ENCODE measurements at regions of chr13 and their contacts with region 1.

Region 1: GRCh38 chr13:26186118-26186870 is 35.8 kb downstream of the RNF6 start:
- DNase-seq: peak; percentile 89
- ATAC-seq: peak; percentile 87
- H3K4me3 ChIP-seq: peak overlapping the region; percentile 63
- H3K27ac ChIP-seq: peak overlapping the region; percentile 71
- H3K4me1 ChIP-seq: peaks cover 3% of the 10 kb centered on the region; the same call in 1 of the 2 replicates
- H3K27me3 ChIP-seq: no peaks in the 10 kb centered on the region
- CTCF ChIP-seq: peak; percentile 42
- POLR2A ChIP-seq: no peak
- RAD21 ChIP-seq: peak; percentile 29

Region 2: DNA sequence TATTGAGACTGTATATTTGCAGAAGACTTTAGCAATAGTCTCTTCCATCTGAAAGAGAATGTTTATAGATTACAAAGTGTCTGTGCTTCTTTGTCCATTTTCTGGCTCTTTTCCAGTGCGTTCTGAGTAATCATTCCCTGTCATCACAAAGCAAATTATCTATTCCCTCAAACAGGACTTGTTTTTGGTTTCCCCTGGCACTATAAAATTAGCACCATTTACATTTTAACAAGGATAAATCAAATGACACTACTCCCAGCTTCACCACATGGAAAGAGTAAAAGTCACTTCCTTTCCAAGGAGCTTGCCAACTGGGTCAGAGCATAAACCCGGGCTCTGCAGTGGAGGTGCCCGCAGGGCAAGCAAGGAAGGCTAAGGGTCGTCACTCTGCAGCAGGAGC is 222.6 kb before region 1 on chr13:
- CTCF ChIA-PET with region 1: no interaction called
- POLR2A ChIA-PET with region 1: no interaction called
- dilution Hi-C with region 1: no loop called
- in situ Hi-C with region 1: no loop called
- intact Hi-C with region 1: no loop called
- DNase-seq: no peak
- ATAC-seq: no peak
- H3K4me3 ChIP-seq: no peak overlapping the region
- H3K27ac ChIP-seq: no peak overlapping the region
- H3K4me1 ChIP-seq: no peaks in the 10 kb centered on the region
- H3K27me3 ChIP-seq: no peaks in the 10 kb centered on the region
- CTCF ChIP-seq: no peak
- POLR2A ChIP-seq: no peak
- RAD21 ChIP-seq: no peak

Region 3: GRCh38 chr13:26221721-26222519 is 35.6 kb after region 1 on chr13 and contains the start of gene RNF6:
- CTCF ChIA-PET with region 1: no interaction called
- POLR2A ChIA-PET with region 1: no interaction called
- dilution Hi-C with region 1: no loop called
- in situ Hi-C with region 1: no loop called
- intact Hi-C with region 1: loop called (anchors 2 kb)
- DNase-seq: peak; percentile 99
- ATAC-seq: peak; percentile 98
- H3K4me3 ChIP-seq: peak within 1 kb of the TSS; percentile 67
- H3K27ac ChIP-seq: peak within 1 kb of the TSS; percentile 96
- H3K4me1 ChIP-seq: 0 out of 2 replicates have a peak, but pooled peaks cover 2% of the 10 kb centered on the region
- H3K27me3 ChIP-seq: no peaks in the 10 kb centered on the region; the same call in 1 of the 2 replicates
- CTCF ChIP-seq: no peak
- POLR2A ChIP-seq: peak; percentile 72
- RAD21 ChIP-seq: no peak
- total RNA-seq, gene RNF6: 33.3 and 51.1 TPM in 2 replicates

Region 4: DNA sequence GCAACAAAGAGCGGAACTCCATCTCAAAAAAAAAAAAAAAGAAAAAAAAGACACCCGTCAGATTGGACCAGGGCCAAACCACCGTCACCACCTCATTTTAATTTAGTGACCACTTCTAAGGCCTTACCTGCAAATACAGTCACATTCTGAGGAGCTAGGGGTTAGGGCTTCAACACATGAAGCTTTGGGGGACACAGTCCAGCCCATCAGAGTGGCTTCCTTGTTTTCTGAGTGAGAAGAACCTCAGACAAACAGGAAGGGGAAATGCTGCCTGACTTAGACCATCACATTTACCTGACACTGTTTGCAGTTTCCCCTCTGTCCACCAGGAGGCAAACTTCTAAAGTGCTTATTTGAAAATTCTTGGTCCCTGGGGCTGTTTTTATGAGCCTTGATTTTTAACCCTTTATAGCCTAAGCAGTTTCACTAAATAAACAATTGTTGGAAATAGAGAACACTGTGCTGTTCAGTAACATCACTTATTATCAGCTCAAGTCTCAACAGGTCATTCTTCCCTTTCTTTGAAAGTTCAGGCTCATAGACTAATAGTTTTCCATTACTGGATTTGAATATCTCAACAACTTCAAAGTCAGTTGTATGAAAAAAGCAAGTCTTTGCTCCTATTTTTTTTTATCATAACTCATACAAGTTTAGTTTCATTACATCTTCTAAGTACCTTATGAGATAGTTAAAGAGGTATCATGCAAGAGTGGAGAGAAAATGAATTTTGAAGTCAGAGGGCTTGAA is 296.3 kb after region 1 on chr13:
- CTCF ChIA-PET with region 1: no interaction called
- POLR2A ChIA-PET with region 1: no interaction called
- dilution Hi-C with region 1: no loop called
- in situ Hi-C with region 1: loop called (anchors 5 kb)
- intact Hi-C with region 1: loop called (anchors 5 kb)
- DNase-seq: peak; percentile 74
- ATAC-seq: peak; percentile 81
- H3K4me3 ChIP-seq: no peak overlapping the region
- H3K27ac ChIP-seq: no peak overlapping the region
- H3K4me1 ChIP-seq: peaks cover 4% of the 10 kb centered on the region
- H3K27me3 ChIP-seq: no peaks in the 10 kb centered on the region; the same call in 1 of the 2 replicates
- CTCF ChIP-seq: peak; percentile 84
- POLR2A ChIP-seq: no peak
- RAD21 ChIP-seq: peak; percentile 76

Region 5: GRCh38 chr13:26498656-26499591 is 312.6 kb after region 1 on chr13:
- CTCF ChIA-PET with region 1: interaction called, 27 read pairs
- POLR2A ChIA-PET with region 1: no interaction called
- dilution Hi-C with region 1: no loop called
- in situ Hi-C with region 1: no loop called
- intact Hi-C with region 1: loop called (anchors 1 kb)
- DNase-seq: peak; percentile 43
- ATAC-seq: peak; percentile 19; the same call in 1 of the 2 replicates
- H3K4me3 ChIP-seq: no peak overlapping the region
- H3K27ac ChIP-seq: peak overlapping the region; percentile 51
- H3K4me1 ChIP-seq: peaks cover 22% of the 10 kb centered on the region
- H3K27me3 ChIP-seq: no peaks in the 10 kb centered on the region; the same call in 1 of the 2 replicates
- CTCF ChIP-seq: no peak
- POLR2A ChIP-seq: no peak
- RAD21 ChIP-seq: no peak

Region 6: DNA sequence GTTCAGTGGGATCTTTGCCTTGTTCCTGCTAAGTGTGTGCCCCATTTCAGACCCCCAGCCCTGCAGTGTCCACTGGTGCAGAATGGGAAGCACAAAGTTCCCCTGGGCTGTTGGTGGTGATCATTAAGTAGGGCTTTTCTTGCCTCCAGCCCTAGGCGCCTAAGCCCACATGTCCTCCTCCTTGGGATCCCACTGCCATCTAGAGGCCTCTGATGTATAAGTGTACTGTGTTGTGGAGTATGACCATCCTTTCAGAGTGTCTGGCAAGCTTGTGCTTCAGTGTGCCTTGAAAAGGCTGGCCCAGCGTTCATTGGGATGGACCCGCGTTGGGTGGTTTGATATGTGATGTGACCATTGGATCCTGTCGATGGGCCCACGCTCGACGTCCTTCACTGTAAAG is 442.4 kb after region 1 on chr13:
- CTCF ChIA-PET with region 1: no interaction called
- POLR2A ChIA-PET with region 1: interaction called, 4 read pairs
- dilution Hi-C with region 1: no loop called
- in situ Hi-C with region 1: no loop called
- intact Hi-C with region 1: loop called (anchors 5 kb)
- DNase-seq: peak; percentile 40
- ATAC-seq: peak; percentile 63
- H3K4me3 ChIP-seq: no peak overlapping the region
- H3K27ac ChIP-seq: no peak overlapping the region
- H3K4me1 ChIP-seq: no peaks in the 10 kb centered on the region
- H3K27me3 ChIP-seq: no peaks in the 10 kb centered on the region
- CTCF ChIP-seq: peak; percentile 42
- POLR2A ChIP-seq: no peak
- RAD21 ChIP-seq: peak; percentile 64

Region 7: GRCh38 chr13:26881178-26881577 is 694.9 kb after region 1 on chr13:
- CTCF ChIA-PET with region 1: no interaction called
- POLR2A ChIA-PET with region 1: no interaction called
- dilution Hi-C with region 1: no loop called
- in situ Hi-C with region 1: loop called (anchors 25 kb)
- intact Hi-C with region 1: no loop called
- DNase-seq: peak; percentile 47
- ATAC-seq: no peak
- H3K4me3 ChIP-seq: no peak overlapping the region
- H3K27ac ChIP-seq: no peak overlapping the region
- H3K4me1 ChIP-seq: no peaks in the 10 kb centered on the region
- H3K27me3 ChIP-seq: peaks cover 12% of the 10 kb centered on the region
- CTCF ChIP-seq: no peak
- POLR2A ChIP-seq: no peak
- RAD21 ChIP-seq: no peak

Region 8: DNA sequence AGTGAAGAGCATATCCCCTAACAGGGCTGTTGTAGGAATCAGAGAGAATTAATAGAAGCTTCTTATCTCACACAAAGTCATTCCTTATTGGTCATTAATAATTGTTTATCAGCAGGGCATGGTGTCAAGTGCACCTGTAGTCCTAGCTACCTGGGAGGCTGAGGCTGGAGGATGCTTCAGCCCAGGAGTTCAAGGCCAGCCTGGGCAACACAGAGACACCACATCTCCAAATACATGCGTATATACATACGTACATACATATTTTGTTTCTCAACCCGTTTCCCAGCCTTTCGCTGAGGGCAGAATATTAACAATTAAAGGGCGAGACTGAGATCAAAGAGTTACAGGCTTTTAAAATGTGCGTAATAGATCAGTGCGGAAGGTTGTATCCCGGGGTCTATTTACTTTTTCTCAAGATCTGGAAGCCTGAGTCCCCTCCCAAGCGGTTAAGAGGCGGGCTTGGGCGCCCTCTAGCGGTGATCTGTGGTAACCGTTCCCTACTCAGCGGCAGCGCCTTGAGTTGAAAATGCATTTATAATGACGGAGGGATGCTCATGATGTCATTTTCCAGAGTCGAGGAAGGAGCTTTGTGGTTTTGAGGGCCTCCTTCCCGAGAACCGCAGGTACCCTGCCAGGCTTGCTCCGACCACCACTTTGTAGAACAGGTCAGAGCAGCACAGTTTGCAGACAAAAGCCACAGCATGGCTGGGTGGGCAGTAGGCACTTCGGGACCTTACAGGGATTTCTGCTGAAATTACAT is 743.9 kb after region 1 on chr13:
- CTCF ChIA-PET with region 1: interaction called, 4 read pairs
- POLR2A ChIA-PET with region 1: no interaction called
- dilution Hi-C with region 1: no loop called
- in situ Hi-C with region 1: no loop called
- intact Hi-C with region 1: loop called (anchors 1 kb)
- DNase-seq: peak; percentile 64
- ATAC-seq: peak; percentile 98
- H3K4me3 ChIP-seq: no peak overlapping the region
- H3K27ac ChIP-seq: no peak overlapping the region
- H3K4me1 ChIP-seq: no peaks in the 10 kb centered on the region
- H3K27me3 ChIP-seq: peaks cover 23% of the 10 kb centered on the region
- CTCF ChIP-seq: peak; percentile 89
- POLR2A ChIP-seq: no peak
- RAD21 ChIP-seq: peak; percentile 75